GM12878 (cell line): ENCODE measurements at regions of chr7 and their contacts with region 1.

Region 1: GRCh38 chr7:3482147-3482964 is 181.3 kb downstream of the SDK1 start:
- DNase-seq: no peak
- ATAC-seq: no peak
- H3K4me3 ChIP-seq: no peak overlapping the region
- H3K27ac ChIP-seq: no peak overlapping the region
- H3K4me1 ChIP-seq: no peaks in the 10 kb centered on the region
- H3K27me3 ChIP-seq: no peaks in the 10 kb centered on the region
- CTCF ChIP-seq: peak; percentile 8 to 23 (median 11); a peak in 1 of 6 replicates
- EP300 ChIP-seq: no peak
- POLR2A ChIP-seq: no peak
- RAD21 ChIP-seq: no peak

Region 2: DNA sequence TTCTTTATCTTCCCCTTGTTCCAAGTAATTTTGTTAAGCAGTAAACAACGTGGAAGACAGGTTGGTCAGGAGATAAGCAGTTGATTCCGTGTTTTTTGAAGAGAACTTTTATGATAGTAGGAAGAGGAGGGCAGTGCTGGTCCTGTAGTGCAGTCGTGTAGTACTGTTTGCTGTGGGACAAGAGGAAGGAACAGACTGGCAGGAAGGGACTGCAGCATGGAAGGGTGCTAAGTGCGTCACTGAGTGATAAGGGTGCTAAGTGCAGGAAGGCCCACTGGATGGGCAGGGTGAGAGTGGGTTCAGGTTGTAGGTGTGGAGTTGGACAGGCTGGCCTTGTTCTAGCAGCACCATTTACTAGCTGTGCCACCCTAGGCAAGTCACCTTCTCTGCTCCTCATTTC is 56.3 kb before region 1 on chr7:
- CTCF ChIA-PET with region 1: no interaction called
- POLR2A ChIA-PET with region 1: no interaction called
- RAD21 ChIA-PET with region 1: no interaction called
- SMC1A ChIA-PET with region 1: no interaction called
- in situ Hi-C with region 1: no loop called
- intact Hi-C with region 1: no loop called
- DNase-seq: no peak
- ATAC-seq: no peak
- H3K4me3 ChIP-seq: no peak overlapping the region
- H3K27ac ChIP-seq: no peak overlapping the region
- H3K4me1 ChIP-seq: no peaks in the 10 kb centered on the region
- H3K27me3 ChIP-seq: no peaks in the 10 kb centered on the region
- CTCF ChIP-seq: no peak
- EP300 ChIP-seq: no peak
- POLR2A ChIP-seq: no peak
- RAD21 ChIP-seq: no peak

Region 3: DNA sequence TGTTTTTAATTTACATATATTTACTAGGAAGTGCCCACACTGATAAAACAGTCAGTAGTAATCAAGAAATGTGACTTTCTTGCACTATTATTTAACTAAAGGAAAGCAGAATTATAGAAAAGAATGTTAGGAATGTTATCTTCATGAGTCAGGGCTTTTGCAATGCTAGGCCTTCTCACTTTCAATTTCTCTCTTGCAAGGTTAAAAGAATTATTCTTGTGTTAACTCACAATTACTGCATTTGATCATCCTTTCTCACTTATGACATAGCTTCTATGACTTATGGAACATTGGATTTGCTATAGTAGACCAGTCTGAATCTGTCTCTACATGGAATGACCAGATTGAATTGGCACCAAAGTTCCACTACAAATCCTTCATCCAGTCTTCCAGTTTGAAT is 11.1 kb after region 1 on chr7:
- CTCF ChIA-PET with region 1: no interaction called
- POLR2A ChIA-PET with region 1: interaction called, 10 read pairs
- RAD21 ChIA-PET with region 1: no interaction called
- SMC1A ChIA-PET with region 1: no interaction called
- in situ Hi-C with region 1: no loop called
- intact Hi-C with region 1: no loop called
- DNase-seq: no peak
- ATAC-seq: no peak
- H3K4me3 ChIP-seq: no peak overlapping the region
- H3K27ac ChIP-seq: no peak overlapping the region
- H3K4me1 ChIP-seq: no peaks in the 10 kb centered on the region
- H3K27me3 ChIP-seq: no peaks in the 10 kb centered on the region
- CTCF ChIP-seq: no peak
- EP300 ChIP-seq: no peak
- POLR2A ChIP-seq: no peak
- RAD21 ChIP-seq: no peak